ENCODE measurements at regions of chr2 and their contacts with region 1.

Region 1: DNA sequence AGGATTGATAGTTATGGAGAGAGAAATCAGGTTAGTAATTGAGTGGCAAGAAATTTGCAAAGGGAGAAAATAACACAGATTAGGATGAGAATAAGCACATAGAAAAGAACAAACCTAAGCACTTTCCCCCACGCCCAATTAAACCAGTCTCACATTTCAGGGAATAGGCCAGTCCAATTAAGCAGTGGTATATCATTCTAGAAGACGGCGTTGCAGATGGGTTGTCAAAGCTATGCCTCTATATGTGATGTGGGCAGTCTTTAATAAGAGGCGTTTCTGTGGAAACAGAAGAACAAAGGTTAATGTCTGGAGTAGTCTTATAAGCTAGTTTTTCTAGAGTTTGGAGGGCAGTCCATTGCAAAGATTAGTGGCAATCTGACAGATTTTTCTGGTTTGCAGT is 61.6 kb downstream of the B3GNT2 start:
- DNase-seq: no peak
- H3K4me3 ChIP-seq: no peak overlapping the region
- CTCF ChIP-seq: no peak

Region 2: DNA sequence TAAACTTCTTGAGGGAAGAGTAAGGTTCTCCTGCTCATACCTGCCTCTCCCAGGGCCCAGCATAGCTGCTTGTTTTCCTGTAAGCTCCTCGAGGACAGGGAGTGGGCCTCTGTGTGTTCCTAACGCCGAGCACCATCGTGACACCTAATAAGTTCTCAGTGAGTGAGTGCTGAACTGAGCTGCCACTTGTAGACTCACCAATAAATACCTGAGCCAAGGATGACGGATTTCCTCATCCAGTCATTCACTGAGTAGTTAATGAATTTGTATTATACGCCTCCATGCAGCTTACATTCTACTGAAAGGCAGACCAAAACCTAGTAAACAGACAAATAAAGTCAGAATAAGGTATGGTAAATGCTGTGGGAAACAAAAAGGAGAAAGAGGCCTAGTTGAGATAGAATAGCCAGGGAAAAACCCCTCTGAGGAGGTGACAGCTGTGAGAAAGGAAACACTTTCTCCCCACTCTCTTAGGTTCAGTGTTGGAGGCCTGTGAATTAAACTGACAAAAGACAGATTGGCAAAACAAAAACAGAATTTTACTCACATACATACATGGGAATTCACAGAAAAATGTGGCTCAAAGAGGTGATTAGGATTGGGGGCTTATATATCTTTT is 77.1 kb after region 1 on chr2:
- in situ Hi-C with region 1: loop called (anchors 5 kb)
- DNase-seq: no peak
- H3K4me3 ChIP-seq: no peak overlapping the region
- CTCF ChIP-seq: no peak